ENCODE measurements at regions of chr1 and their contacts with region 1.

Region 1: DNA sequence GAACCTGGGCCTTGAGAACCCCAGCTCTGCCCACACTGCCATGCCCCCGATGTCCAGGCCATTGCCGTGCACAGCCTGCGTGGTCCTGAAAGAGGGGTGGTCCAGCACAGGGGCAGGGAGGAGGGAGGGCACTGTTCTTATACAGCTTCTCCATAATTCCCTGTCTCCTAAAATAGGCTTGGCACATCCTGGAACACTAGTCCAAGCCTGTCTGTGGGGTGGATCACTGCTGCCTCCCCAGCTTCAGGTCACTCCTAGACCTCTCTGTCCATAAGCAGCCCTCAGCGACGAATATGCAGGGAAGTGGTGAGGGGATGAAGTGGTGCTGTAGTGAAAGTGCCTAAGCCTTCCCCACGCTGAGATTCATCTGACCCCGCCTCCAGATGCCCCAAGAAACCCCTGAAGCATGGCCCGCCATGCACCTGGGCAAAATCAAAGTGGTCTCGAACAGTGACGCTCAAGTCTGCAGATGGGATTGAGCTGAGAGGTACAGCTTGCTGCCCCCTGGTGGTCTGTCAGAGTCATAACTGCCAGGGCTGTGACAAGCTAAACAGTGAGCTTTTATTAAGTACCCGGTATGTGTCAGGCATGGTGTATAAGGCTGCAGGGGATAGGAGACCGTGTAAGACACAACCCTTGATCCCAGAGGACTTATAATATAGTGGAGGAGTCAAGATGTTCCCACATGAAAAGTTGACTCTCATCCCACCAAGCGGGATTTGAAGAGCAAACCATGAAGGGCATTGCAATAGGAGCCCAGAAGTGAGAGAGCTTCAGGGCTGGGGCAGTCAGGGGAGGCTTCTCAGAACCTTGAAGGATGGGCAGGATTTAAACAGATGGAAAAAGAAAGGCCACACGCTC is 66.6 kb downstream of the FAM163A start:
- DNase-seq: peak; percentile 80
- ATAC-seq: peak; percentile 65
- H3K4me3 Mint-ChIP-seq: no peak overlapping the region
- H3K27ac Mint-ChIP-seq: no peak overlapping the region
- H3K4me1 Mint-ChIP-seq: peaks cover 11% of the 10 kb centered on the region
- H3K27me3 Mint-ChIP-seq: peaks cover 2% of the 10 kb centered on the region

Region 2: GRCh38 chr1:178847396-178847849 is 962.3 kb before region 1 on chr1:
- CTCF ChIA-PET with region 1: no interaction called
- POLR2A ChIA-PET with region 1: no interaction called
- intact Hi-C with region 1: no loop called
- DNase-seq: no peak
- ATAC-seq: no peak
- H3K4me3 Mint-ChIP-seq: no peak overlapping the region
- H3K27ac Mint-ChIP-seq: no peak overlapping the region
- H3K4me1 Mint-ChIP-seq: no peaks in the 10 kb centered on the region
- H3K27me3 Mint-ChIP-seq: no peaks in the 10 kb centered on the region

Region 3: GRCh38 chr1:179425186-179425585 is 384.6 kb before region 1 on chr1:
- CTCF ChIA-PET with region 1: no interaction called
- POLR2A ChIA-PET with region 1: no interaction called
- intact Hi-C with region 1: no loop called
- DNase-seq: no peak
- ATAC-seq: no peak
- H3K4me3 Mint-ChIP-seq: no peak overlapping the region
- H3K27ac Mint-ChIP-seq: no peak overlapping the region
- H3K4me1 Mint-ChIP-seq: no peaks in the 10 kb centered on the region
- H3K27me3 Mint-ChIP-seq: no peaks in the 10 kb centered on the region

Region 4: GRCh38 chr1:179719272-179719671 is 90.5 kb before region 1 on chr1:
- CTCF ChIA-PET with region 1: interaction called, 13 read pairs
- POLR2A ChIA-PET with region 1: no interaction called
- intact Hi-C with region 1: no loop called
- DNase-seq: no peak
- ATAC-seq: no peak
- H3K4me3 Mint-ChIP-seq: no peak overlapping the region
- H3K27ac Mint-ChIP-seq: no peak overlapping the region
- H3K4me1 Mint-ChIP-seq: no peaks in the 10 kb centered on the region
- H3K27me3 Mint-ChIP-seq: peaks cover 2% of the 10 kb centered on the region

Region 5: DNA sequence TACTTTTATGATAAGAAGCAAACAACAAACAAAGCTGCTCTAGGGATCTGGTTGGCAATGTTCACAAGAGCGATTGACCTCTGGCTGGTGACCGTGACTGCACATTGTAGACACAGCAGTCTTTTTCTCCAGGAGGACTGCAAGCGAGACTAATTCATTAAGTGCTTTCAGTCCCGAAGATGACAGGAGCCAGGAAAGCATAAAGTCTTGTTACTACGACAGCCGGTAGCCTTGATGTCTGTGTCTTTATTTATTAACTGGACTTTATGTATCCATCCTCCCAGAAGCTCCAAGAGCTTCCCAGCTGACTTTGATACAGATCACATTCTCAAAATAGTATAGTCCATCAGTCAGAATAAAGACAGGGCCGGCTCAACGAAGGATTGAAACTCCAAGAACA is 48.4 kb before region 1 on chr1:
- CTCF ChIA-PET with region 1: interaction called, 12 read pairs
- POLR2A ChIA-PET with region 1: no interaction called
- intact Hi-C with region 1: no loop called
- DNase-seq: no peak
- ATAC-seq: no peak
- H3K4me3 Mint-ChIP-seq: no peak overlapping the region
- H3K27ac Mint-ChIP-seq: no peak overlapping the region
- H3K4me1 Mint-ChIP-seq: no peaks in the 10 kb centered on the region
- H3K27me3 Mint-ChIP-seq: no peaks in the 10 kb centered on the region

Region 6: DNA sequence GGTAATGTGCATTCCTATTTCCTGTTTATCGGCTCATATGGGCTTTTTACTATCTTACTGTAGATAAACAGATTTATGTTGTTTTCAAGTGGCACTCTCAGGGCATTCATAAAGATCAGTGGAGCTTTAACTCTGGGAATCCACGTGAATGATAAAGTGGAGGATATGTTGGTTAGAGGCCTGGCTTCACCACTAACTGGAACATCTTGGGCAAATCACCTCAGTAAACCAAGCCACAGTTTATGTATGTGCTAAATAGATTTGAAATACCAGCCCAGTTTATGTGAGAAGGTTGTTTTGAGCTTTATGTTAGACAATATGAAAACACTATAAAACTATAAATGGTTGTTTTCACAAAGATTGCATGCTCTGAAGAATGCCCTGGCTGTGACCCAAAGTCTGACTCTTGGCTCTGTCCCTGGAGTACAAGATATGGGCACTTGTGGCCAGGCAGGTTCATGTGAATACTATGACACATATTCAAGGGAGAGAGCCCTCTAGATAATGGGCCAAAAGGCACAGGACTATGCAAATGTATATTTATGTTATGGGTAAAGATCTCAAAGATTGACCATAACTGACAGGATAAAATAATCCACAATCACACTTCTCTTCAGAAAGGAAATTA is 30.0 kb before region 1 on chr1:
- CTCF ChIA-PET with region 1: interaction called, 11 read pairs
- POLR2A ChIA-PET with region 1: no interaction called
- intact Hi-C with region 1: no loop called
- DNase-seq: no peak
- ATAC-seq: no peak
- H3K4me3 Mint-ChIP-seq: no peak overlapping the region
- H3K27ac Mint-ChIP-seq: no peak overlapping the region
- H3K4me1 Mint-ChIP-seq: no peaks in the 10 kb centered on the region
- H3K27me3 Mint-ChIP-seq: no peaks in the 10 kb centered on the region

Region 7: GRCh38 chr1:179824265-179824664 is 14.5 kb after region 1 on chr1:
- CTCF ChIA-PET with region 1: interaction called, 60 read pairs
- POLR2A ChIA-PET with region 1: no interaction called
- intact Hi-C with region 1: no loop called
- DNase-seq: no peak
- ATAC-seq: no peak
- H3K4me3 Mint-ChIP-seq: no peak overlapping the region
- H3K27ac Mint-ChIP-seq: no peak overlapping the region
- H3K4me1 Mint-ChIP-seq: no peaks in the 10 kb centered on the region
- H3K27me3 Mint-ChIP-seq: no peaks in the 10 kb centered on the region

Region 8: DNA sequence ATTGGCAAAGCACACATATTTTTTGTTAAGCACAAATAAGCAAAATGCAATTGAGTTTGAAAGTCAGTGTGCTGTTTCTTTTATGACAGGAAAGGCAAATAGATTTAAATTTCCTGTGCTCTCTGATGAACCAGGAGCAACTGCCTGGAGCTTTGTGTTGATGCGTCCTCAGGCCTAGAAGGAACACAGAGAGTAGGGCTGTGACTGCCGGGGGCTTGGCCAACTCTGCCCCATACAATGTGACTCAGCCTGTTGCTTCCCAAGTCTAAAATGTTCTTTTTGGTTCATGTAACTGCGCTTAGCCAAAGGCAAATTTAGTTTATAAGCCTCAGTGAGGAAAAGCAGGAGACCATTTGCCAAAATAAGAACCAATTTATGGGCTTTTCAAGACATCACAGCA is 30.4 kb after region 1 on chr1:
- CTCF ChIA-PET with region 1: interaction called, 16 read pairs
- POLR2A ChIA-PET with region 1: no interaction called
- intact Hi-C with region 1: no loop called
- DNase-seq: no peak
- ATAC-seq: no peak
- H3K4me3 Mint-ChIP-seq: no peak overlapping the region
- H3K27ac Mint-ChIP-seq: no peak overlapping the region
- H3K4me1 Mint-ChIP-seq: no peaks in the 10 kb centered on the region
- H3K27me3 Mint-ChIP-seq: no peaks in the 10 kb centered on the region

Region 9: DNA sequence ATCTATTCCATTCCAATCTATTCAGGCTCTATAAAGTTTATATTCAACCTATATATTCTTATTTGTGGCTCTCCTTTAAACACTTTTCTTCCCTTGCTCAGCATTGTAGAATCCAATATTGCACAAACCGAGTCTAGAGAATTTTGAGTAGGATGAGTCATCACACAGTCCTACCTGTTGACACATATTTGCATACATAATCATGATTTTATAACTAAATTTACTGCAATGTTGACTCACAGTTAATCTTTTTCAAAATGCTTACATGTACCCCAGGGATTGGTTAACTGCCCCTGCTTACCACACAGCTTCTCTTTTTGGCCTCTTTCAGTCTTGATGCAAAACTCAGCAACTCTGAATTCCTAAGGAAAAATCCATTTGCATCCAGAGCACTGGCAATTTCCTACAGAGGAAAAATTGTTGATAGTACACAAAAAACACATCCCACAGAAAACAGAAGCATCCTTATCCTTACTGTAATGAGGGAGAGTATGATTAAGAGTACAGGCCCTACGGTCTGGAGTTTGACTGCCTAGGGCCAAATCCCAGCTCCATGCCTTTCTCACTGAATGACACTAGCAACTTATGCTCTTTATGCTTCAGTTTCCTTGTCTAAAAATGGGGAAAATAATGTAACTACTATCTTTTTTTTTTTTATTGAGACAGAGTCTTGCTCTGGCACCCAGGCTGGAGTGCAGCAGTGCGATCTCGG is 116.9 kb after region 1 on chr1:
- CTCF ChIA-PET with region 1: no interaction called
- POLR2A ChIA-PET with region 1: no interaction called
- intact Hi-C with region 1: no loop called
- DNase-seq: no peak
- ATAC-seq: no peak
- H3K4me3 Mint-ChIP-seq: no peak overlapping the region
- H3K27ac Mint-ChIP-seq: no peak overlapping the region
- H3K4me1 Mint-ChIP-seq: no peaks in the 10 kb centered on the region
- H3K27me3 Mint-ChIP-seq: no peaks in the 10 kb centered on the region

Region 10: DNA sequence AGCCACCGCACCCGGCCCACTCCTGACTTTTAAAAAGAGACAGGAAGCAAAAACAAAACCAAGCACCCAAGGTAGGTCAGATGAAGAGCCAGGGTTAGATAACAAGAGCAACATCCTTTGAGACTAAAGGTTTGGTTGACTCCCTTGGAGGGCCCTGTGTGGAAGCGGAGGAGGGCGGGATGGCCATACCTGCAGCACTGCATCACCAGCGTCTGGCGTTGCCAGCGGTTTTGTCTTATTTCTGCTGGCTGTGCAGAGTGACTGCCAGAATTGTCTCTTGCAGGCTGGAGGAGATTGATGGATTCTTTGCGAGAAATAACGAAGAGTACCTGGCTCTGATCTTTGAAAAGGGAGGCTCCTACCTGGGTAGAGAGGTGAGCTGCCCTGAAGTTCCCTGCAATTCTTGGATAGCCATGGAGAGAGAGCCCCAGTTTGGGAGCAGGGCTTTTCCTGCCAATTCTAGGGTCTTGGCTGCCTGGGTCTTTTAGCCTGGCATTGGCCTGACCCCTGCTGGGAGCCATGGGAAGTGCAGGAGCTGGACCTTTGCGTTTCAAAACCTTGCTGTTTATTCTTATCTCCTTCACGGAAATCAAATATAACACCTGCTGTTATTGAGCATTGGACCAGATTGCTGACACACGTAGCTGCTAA is 368.9 kb after region 1 on chr1:
- CTCF ChIA-PET with region 1: interaction called, 7 read pairs
- POLR2A ChIA-PET with region 1: no interaction called
- intact Hi-C with region 1: loop called in 1 of 2 experiments (anchors 2 kb)
- DNase-seq: peak; percentile 80
- ATAC-seq: peak; percentile 61
- H3K4me3 Mint-ChIP-seq: no peak overlapping the region
- H3K27ac Mint-ChIP-seq: no peak overlapping the region
- H3K4me1 Mint-ChIP-seq: no peaks in the 10 kb centered on the region
- H3K27me3 Mint-ChIP-seq: no peaks in the 10 kb centered on the region

Measured in activated CD4-positive, alpha-beta T cell treated with anti-CD3 and anti-CD28 coated beads for 36 hours (primary cell).